Common myeloid progenitor, CD34-positive (primary cell): ENCODE measurements at regions of chr1 and their contacts with region 1.

Region 1: GRCh38 chr1:29033829-29034466 is 89.8 kb downstream of the TMEM200B start:
- DNase-seq: peak; percentile 47 to 67 (median 66)
- H3K4me3 ChIP-seq: no peak overlapping the region
- H3K27ac ChIP-seq: no peak overlapping the region
- H3K4me1 ChIP-seq: peaks cover 0 to 12% (median 6%) of the 10 kb centered on the region in 4 experiments
- H3K27me3 ChIP-seq: no peaks in the 10 kb centered on the region

Region 2: DNA sequence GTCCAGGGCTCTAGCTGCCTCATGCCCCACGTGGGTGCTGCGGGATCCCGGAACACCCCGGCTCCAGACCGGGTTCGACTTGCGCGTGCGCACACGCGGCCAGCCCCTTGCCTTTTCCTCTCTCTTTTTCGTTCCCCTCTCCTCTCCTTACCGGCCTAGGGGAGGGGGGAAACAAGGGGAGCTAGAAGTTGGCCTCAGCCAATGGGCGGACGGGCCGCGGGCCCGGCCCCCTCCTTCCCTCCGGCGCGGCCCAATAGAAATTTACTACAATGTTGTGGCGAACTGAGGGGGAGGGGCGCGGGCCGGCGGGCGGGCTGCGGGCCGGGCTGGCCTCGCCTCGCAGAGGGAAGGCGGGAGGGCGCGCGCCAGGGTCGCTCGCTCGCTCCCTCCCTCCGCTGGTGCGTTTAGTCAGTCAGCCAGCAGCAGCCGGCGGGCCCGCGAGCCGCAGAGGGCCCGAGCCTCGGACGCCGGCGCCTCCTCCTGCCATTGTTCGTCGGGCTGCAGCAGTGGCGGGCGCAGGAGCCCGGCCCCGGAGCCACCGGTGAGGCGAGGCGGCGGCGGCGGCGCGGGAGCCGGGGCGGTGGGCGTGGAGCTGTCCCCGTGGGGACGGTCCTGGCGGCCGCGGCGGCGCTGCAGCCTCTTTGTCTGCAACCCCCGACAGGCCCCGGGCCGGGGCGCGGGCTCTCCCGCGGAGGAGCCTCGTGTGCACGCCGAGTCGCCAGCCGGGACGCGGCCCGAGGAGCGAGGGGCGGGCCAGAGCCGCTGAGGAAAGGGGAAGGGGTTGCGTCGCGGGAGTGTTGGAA is 119.5 kb before region 1 on chr1 and contains the start of gene EPB41:
- CTCF ChIA-PET with region 1: interaction called, 15 read pairs
- POLR2A ChIA-PET with region 1: no interaction called
- DNase-seq: peak; percentile 94 to 97 (median 97)
- H3K4me3 ChIP-seq: peak within 1 kb of the TSS; percentile 57 to 85 (median 75)
- H3K27ac ChIP-seq: peak within 1 kb of the TSS in 1 of 2 experiments; percentile 54
- H3K4me1 ChIP-seq: peaks cover 9 to 35% (median 14%) of the 10 kb centered on the region in 4 experiments
- H3K27me3 ChIP-seq: no peaks in the 10 kb centered on the region

Region 3: GRCh38 chr1:29011775-29012174 is 22.2 kb before region 1 on chr1:
- CTCF ChIA-PET with region 1: no interaction called
- POLR2A ChIA-PET with region 1: no interaction called
- DNase-seq: no peak
- H3K4me3 ChIP-seq: no peak overlapping the region
- H3K27ac ChIP-seq: no peak overlapping the region
- H3K4me1 ChIP-seq: no peaks in the 10 kb centered on the region
- H3K27me3 ChIP-seq: no peaks in the 10 kb centered on the region

Region 4: DNA sequence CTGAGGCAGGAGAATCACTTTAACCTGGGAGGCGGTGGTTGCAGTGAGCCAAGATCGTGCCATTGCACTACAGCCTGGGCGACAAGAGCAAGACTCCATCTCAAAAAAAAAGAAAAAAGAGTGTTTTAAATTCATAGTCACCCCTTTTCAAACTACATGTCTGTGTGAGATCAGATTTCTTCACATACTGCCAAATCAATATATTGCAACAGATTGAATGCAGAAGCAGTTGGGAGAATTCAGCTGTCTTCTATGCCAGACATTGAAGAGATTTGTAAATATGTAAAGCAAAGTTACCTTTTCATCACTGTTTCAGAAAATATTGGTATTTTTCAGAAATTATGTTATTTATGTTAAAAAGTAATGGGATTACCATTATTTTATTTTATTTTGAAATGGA is 11.3 kb before region 1 on chr1:
- CTCF ChIA-PET with region 1: interaction called, 14 read pairs
- POLR2A ChIA-PET with region 1: no interaction called
- DNase-seq: no peak
- H3K4me3 ChIP-seq: no peak overlapping the region
- H3K27ac ChIP-seq: no peak overlapping the region
- H3K4me1 ChIP-seq: no peaks in the 10 kb centered on the region
- H3K27me3 ChIP-seq: no peaks in the 10 kb centered on the region

Region 5: GRCh38 chr1:29202584-29203340 is 168.8 kb after region 1 on chr1:
- CTCF ChIA-PET with region 1: interaction called, 10 read pairs
- POLR2A ChIA-PET with region 1: no interaction called
- DNase-seq: peak; percentile 88 to 94 (median 93)
- H3K4me3 ChIP-seq: no peak overlapping the region
- H3K27ac ChIP-seq: peak overlapping the region in 1 of 2 experiments; percentile 16
- H3K4me1 ChIP-seq: peaks cover 5 to 19% (median 13%) of the 10 kb centered on the region in 4 experiments
- H3K27me3 ChIP-seq: no peaks in the 10 kb centered on the region